ENCODE measurements at regions of chr2 and their contacts with region 1.

Region 1: GRCh38 chr2:16608661-16609643 is 56.7 kb downstream of the CYRIA start:
- DNase-seq: peak; percentile 61
- H3K4me3 ChIP-seq: peak overlapping the region; percentile 16 to 40 (median 26)
- H3K27ac ChIP-seq: no peak overlapping the region
- H3K4me1 ChIP-seq: peaks cover 3% of the 10 kb centered on the region
- H3K27me3 ChIP-seq: no peaks in the 10 kb centered on the region
- CTCF ChIP-seq: peak; percentile 95 to 97

Region 2: GRCh38 chr2:16139663-16140615 is 469.0 kb before region 1 on chr2:
- CTCF ChIA-PET with region 1: interaction called, 3 read pairs
- dilution Hi-C with region 1: no loop called
- in situ Hi-C with region 1: no loop called
- intact Hi-C with region 1: loop called (anchors 2 kb)
- DNase-seq: no peak
- H3K4me3 ChIP-seq: no peak overlapping the region
- H3K27ac ChIP-seq: no peak overlapping the region
- H3K4me1 ChIP-seq: peaks cover 18% of the 10 kb centered on the region
- H3K27me3 ChIP-seq: no peaks in the 10 kb centered on the region
- CTCF ChIP-seq: no peak

Region 3: DNA sequence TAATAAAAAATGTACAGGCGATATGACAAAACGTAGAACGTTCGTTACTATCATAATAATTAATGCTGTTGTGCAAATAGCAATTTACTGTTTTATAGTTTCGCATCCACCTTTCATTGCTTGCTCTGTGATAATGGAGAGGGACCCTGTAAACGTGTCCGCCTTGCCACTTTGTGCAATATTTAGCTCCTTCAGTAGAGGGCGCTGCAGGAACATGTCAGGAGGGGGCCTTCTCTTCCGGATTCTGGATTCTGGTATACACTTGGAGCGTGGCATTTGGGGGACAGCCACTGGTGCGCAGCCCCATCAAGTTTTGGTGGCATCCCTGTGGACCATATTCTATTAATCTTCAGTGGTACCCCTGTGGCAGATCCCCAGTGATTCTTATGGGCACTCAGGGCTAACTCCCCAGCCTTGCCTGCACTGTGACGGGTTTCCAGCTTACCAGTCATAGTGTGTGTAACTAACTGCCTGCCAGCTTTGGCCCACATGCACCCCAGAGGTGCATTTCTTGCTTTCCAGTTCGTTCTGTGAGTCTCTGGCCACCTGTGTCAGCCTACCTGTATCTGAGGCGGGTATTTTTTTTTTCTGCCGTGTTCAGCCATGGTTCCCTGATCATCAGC is 83.6 kb before region 1 on chr2:
- CTCF ChIA-PET with region 1: no interaction called
- dilution Hi-C with region 1: no loop called
- in situ Hi-C with region 1: no loop called
- intact Hi-C with region 1: loop called (anchors 1 kb)
- DNase-seq: peak; percentile 10
- H3K4me3 ChIP-seq: no peak overlapping the region
- H3K27ac ChIP-seq: no peak overlapping the region
- H3K4me1 ChIP-seq: no peaks in the 10 kb centered on the region
- H3K27me3 ChIP-seq: peaks cover 2% of the 10 kb centered on the region
- CTCF ChIP-seq: peak; percentile 52 to 63

Region 4: GRCh38 chr2:16546128-16546754 is 62.7 kb before region 1 on chr2:
- CTCF ChIA-PET with region 1: no interaction called
- dilution Hi-C with region 1: no loop called
- in situ Hi-C with region 1: no loop called
- intact Hi-C with region 1: loop called (anchors 1 kb)
- DNase-seq: peak; percentile 52
- H3K4me3 ChIP-seq: no peak overlapping the region
- H3K27ac ChIP-seq: no peak overlapping the region
- H3K4me1 ChIP-seq: no peaks in the 10 kb centered on the region
- H3K27me3 ChIP-seq: no peaks in the 10 kb centered on the region
- CTCF ChIP-seq: no peak

Region 5: DNA sequence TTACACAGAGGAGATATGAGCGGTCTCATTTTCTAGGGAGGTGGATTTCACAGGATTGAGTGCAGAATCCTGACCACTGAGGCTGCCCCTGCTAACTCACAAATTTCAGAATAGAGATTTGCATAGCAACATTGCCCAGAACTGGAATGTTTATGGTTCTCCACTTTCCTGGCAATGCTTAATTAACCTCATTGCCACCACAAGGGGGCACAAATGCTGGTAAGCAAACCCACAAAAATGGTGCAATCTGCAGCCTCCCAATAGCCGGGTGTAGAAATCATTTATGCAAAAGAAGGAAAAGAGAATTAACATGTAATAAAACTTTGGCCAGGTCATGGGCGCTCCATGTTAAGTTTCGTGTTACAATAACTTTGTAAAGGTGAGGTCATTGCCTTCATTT is 55.7 kb before region 1 on chr2:
- CTCF ChIA-PET with region 1: no interaction called
- dilution Hi-C with region 1: no loop called
- in situ Hi-C with region 1: no loop called
- intact Hi-C with region 1: loop called (anchors 1 kb)
- DNase-seq: peak; percentile 28
- H3K4me3 ChIP-seq: no peak overlapping the region
- H3K27ac ChIP-seq: no peak overlapping the region
- H3K4me1 ChIP-seq: no peaks in the 10 kb centered on the region
- H3K27me3 ChIP-seq: no peaks in the 10 kb centered on the region
- CTCF ChIP-seq: peak; percentile 51 to 68

Region 6: GRCh38 chr2:16756831-16757644 is 148.1 kb after region 1 on chr2:
- CTCF ChIA-PET with region 1: interaction called, 7 read pairs
- dilution Hi-C with region 1: no loop called
- in situ Hi-C with region 1: no loop called
- intact Hi-C with region 1: loop called (anchors 1 kb)
- DNase-seq: peak; percentile 34
- H3K4me3 ChIP-seq: no peak overlapping the region
- H3K27ac ChIP-seq: no peak overlapping the region
- H3K4me1 ChIP-seq: no peaks in the 10 kb centered on the region
- H3K27me3 ChIP-seq: no peaks in the 10 kb centered on the region
- CTCF ChIP-seq: peak; percentile 73 to 85